A673 (cell line): ENCODE measurements at regions of chr7 and their contacts with region 1.

Region 1: GRCh38 chr7:81499262-81500116 is 270.4 kb downstream of the HGF start:
- DNase-seq: peak; percentile 93
- H3K4me3 ChIP-seq: no peak overlapping the region
- H3K27ac ChIP-seq: peak overlapping the region; percentile 71
- H3K4me1 ChIP-seq: peaks cover 27% of the 10 kb centered on the region
- H3K27me3 ChIP-seq: no peaks in the 10 kb centered on the region
- CTCF ChIP-seq: peak; percentile 71

Region 2: GRCh38 chr7:81415181-81415580 is 84.3 kb before region 1 on chr7:
- CTCF ChIA-PET with region 1: no interaction called
- POLR2A ChIA-PET with region 1: no interaction called
- intact Hi-C with region 1: no loop called
- DNase-seq: no peak
- H3K4me3 ChIP-seq: no peak overlapping the region
- H3K27ac ChIP-seq: no peak overlapping the region
- H3K4me1 ChIP-seq: no peaks in the 10 kb centered on the region
- H3K27me3 ChIP-seq: no peaks in the 10 kb centered on the region
- CTCF ChIP-seq: no peak

Region 3: DNA sequence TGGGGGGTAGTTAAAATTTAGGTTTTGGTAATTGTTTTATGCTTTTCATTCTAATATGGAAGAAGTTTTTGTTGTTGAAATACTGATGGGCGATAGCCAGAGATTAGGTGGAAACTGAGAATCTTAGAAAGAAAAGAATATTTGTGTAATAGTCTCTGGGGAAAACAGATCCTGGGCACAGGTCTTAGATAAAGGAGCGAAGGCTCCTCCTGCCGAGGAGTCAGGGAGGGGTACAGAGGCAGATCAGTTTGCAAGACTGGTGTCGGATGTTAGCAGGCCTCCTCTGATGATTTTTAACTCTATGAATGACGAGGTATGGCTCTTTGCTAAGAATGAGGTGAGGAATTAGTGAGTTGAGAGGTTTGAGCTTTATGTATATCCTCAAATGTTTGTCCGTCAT is 69.3 kb before region 1 on chr7:
- CTCF ChIA-PET with region 1: no interaction called
- POLR2A ChIA-PET with region 1: no interaction called
- intact Hi-C with region 1: no loop called
- DNase-seq: no peak
- H3K4me3 ChIP-seq: no peak overlapping the region
- H3K27ac ChIP-seq: no peak overlapping the region
- H3K4me1 ChIP-seq: peaks cover 8% of the 10 kb centered on the region
- H3K27me3 ChIP-seq: peaks cover 3% of the 10 kb centered on the region
- CTCF ChIP-seq: no peak

Region 4: DNA sequence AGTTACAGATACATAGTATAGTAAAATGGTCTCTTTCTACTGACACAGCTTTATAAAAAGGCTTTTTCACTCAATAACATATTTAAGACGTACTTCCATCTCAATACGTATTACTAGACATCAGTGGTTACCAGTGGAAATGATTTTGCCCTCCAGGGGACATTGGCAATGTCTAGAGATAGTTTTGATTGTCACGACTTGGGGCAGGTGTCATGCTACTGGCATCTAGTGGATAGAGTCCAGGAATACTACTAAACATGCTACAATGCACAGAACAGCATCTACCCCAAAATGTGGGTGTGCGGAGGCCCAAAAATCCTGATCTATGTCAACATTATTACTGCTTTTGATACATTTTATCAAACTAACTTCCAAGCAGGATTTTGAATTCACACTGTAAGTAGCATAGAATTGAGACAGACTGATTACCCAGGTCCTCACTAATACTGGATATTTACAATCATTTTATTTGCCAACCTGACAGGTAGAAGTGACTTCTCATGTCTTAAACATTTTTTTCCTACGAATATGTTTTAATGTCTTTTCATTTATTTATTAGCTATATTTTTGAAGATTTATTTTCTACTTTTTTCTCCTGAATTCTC is 216.6 kb after region 1 on chr7:
- CTCF ChIA-PET with region 1: interaction called, 3 read pairs
- POLR2A ChIA-PET with region 1: no interaction called
- intact Hi-C with region 1: loop called (anchors 1 kb)
- DNase-seq: peak; percentile 77
- H3K4me3 ChIP-seq: no peak overlapping the region
- H3K27ac ChIP-seq: no peak overlapping the region
- H3K4me1 ChIP-seq: peaks cover 6% of the 10 kb centered on the region
- H3K27me3 ChIP-seq: no peaks in the 10 kb centered on the region
- CTCF ChIP-seq: peak; percentile 62

Region 5: DNA sequence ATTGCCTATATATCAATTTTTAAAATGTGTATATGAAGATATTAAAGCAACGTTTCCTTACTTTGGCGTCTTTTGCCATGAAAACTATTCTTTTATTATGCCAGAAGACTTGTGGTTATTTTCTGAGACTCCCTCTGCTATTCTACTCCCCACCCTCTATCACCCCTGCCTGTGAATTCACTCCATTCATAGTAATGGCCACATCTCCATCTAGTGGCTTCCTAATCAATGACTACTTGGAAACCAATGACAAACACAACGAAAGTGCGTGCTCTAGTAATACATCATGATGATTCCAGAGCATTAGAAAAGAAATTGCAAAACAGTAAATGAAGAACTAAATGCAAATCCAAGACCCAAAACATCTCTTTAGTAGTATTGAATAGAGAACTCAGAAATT is 457.0 kb after region 1 on chr7:
- CTCF ChIA-PET with region 1: no interaction called
- POLR2A ChIA-PET with region 1: interaction called, 3 read pairs
- intact Hi-C with region 1: loop called (anchors 1 kb)
- DNase-seq: peak; percentile 70
- H3K4me3 ChIP-seq: no peak overlapping the region
- H3K27ac ChIP-seq: no peak overlapping the region
- H3K4me1 ChIP-seq: peaks cover 6% of the 10 kb centered on the region
- H3K27me3 ChIP-seq: no peaks in the 10 kb centered on the region
- CTCF ChIP-seq: peak; percentile 68

Region 6: DNA sequence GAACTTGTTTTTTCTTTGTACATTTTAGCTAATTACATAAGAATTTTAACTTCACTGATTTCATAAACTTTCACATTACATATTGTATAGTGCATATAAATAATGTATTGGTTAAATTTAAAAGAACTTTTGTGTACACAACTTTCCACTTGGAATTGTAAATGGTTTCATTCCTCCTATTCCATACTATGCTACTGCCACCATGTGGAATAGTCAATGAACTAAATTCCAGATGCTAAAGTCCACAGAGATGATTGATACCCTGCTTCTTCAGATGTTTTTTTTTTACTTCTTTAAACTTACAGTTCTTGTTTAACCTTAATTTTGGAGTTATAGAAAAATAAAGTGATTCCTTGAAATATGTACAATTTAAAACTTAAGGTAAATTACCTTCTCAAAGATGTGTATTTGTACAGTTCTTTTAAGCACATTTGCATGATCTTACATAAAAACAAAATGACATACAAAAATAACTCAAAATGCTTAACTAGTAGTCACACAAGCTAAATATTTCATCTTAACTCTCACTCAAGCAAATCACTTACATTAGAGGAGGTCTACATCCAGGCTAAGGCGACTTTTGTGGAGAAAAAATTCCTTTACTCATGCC is 518.0 kb after region 1 on chr7:
- CTCF ChIA-PET with region 1: no interaction called
- POLR2A ChIA-PET with region 1: no interaction called
- intact Hi-C with region 1: loop called (anchors 2 kb)
- DNase-seq: peak; percentile 43
- H3K4me3 ChIP-seq: no peak overlapping the region
- H3K27ac ChIP-seq: no peak overlapping the region
- H3K4me1 ChIP-seq: no peaks in the 10 kb centered on the region
- H3K27me3 ChIP-seq: no peaks in the 10 kb centered on the region
- CTCF ChIP-seq: peak; percentile 69

Region 7: GRCh38 chr7:82036146-82036886 is 536.8 kb after region 1 on chr7:
- CTCF ChIA-PET with region 1: no interaction called
- POLR2A ChIA-PET with region 1: no interaction called
- intact Hi-C with region 1: loop called (anchors 5 kb)
- DNase-seq: peak; percentile 59
- H3K4me3 ChIP-seq: no peak overlapping the region
- H3K27ac ChIP-seq: no peak overlapping the region
- H3K4me1 ChIP-seq: no peaks in the 10 kb centered on the region
- H3K27me3 ChIP-seq: no peaks in the 10 kb centered on the region
- CTCF ChIP-seq: no peak

Region 8: GRCh38 chr7:82247814-82248433 is 748.4 kb after region 1 on chr7:
- CTCF ChIA-PET with region 1: no interaction called
- POLR2A ChIA-PET with region 1: no interaction called
- intact Hi-C with region 1: loop called (anchors 10 kb)
- DNase-seq: peak; percentile 40
- H3K4me3 ChIP-seq: no peak overlapping the region
- H3K27ac ChIP-seq: no peak overlapping the region
- H3K4me1 ChIP-seq: peaks cover 11% of the 10 kb centered on the region
- H3K27me3 ChIP-seq: no peaks in the 10 kb centered on the region
- CTCF ChIP-seq: peak; percentile 80

Region 9: DNA sequence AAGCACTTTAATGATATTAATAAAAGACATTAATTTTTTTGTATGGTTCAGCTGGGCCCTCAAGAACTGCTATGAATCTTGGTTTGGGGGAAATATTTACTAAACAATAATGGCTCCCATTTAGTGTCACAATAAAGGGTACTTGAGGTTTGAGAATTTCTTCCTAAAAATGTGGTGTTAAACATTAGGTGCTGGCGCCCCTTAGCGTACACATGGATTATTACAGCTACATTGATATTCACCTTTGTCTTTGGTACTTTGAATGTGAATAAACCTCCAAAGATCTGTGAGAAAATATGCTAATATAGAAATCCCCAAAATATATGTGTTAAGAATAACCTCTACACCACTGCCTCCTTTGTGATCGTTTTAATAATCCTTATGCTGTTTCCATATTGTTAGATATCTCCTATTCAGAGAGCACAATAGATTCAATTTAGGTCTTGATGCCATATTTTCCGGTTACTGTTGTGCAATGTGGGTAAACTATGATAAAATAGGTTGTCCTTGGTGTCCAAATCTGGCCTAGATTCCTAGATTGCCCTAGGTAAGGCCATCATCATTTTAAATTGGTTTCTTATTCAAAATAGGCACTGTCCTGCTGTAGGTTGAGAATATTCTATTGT is 1105.9 kb after region 1 on chr7:
- CTCF ChIA-PET with region 1: no interaction called
- POLR2A ChIA-PET with region 1: no interaction called
- intact Hi-C with region 1: loop called (anchors 5 kb)
- DNase-seq: peak; percentile 74
- H3K4me3 ChIP-seq: no peak overlapping the region
- H3K27ac ChIP-seq: no peak overlapping the region
- H3K4me1 ChIP-seq: peaks cover 4% of the 10 kb centered on the region
- H3K27me3 ChIP-seq: no peaks in the 10 kb centered on the region
- CTCF ChIP-seq: peak; percentile 84